CD4-positive, alpha-beta memory T cell (primary cell): ENCODE measurements at regions of chr10 and their contacts with region 1.

Region 1: GRCh38 chr10:72126184-72126871 is 38.0 kb upstream of the SPOCK2 start:
- DNase-seq: peak in 3 of 5 donors; percentile 16 to 28 (median 25)
- H3K4me3 ChIP-seq: no peak overlapping the region
- H3K4me3 Mint-ChIP-seq: no peak overlapping the region
- H3K27ac ChIP-seq: no peak overlapping the region
- H3K27ac Mint-ChIP-seq: peak overlapping the region in 5 of 7 donors; percentile 25 to 87 (median 38)
- H3K4me1 ChIP-seq: peaks cover 29% of the 10 kb centered on the region
- H3K4me1 Mint-ChIP-seq: peaks cover 24 to 34% (median 26%) of the 10 kb centered on the region in 4 donors
- H3K27me3 ChIP-seq: no peaks in the 10 kb centered on the region
- H3K27me3 Mint-ChIP-seq: no peaks in the 10 kb centered on the region

Region 2: GRCh38 chr10:72079356-72079755 is 47.0 kb before region 1 on chr10:
- CTCF ChIA-PET with region 1: interaction called, 10 read pairs
- POLR2A ChIA-PET with region 1: interaction called, 5 read pairs
- intact Hi-C with region 1: no loop called
- DNase-seq: peak; percentile 55 to 85 (median 71)
- H3K4me3 ChIP-seq: peak overlapping the region in 1 of 2 donors; percentile 25
- H3K4me3 Mint-ChIP-seq: peak overlapping the region; percentile 47 to 96 (median 81)
- H3K27ac ChIP-seq: peak overlapping the region; percentile 94
- H3K27ac Mint-ChIP-seq: peak overlapping the region; percentile 86 to 97 (median 93)
- H3K4me1 ChIP-seq: peaks cover 97% of the 10 kb centered on the region
- H3K4me1 Mint-ChIP-seq: peaks cover 59 to 99% (median 87%) of the 10 kb centered on the region in 4 donors
- H3K27me3 ChIP-seq: no peaks in the 10 kb centered on the region
- H3K27me3 Mint-ChIP-seq: no peaks in the 10 kb centered on the region

Region 3: DNA sequence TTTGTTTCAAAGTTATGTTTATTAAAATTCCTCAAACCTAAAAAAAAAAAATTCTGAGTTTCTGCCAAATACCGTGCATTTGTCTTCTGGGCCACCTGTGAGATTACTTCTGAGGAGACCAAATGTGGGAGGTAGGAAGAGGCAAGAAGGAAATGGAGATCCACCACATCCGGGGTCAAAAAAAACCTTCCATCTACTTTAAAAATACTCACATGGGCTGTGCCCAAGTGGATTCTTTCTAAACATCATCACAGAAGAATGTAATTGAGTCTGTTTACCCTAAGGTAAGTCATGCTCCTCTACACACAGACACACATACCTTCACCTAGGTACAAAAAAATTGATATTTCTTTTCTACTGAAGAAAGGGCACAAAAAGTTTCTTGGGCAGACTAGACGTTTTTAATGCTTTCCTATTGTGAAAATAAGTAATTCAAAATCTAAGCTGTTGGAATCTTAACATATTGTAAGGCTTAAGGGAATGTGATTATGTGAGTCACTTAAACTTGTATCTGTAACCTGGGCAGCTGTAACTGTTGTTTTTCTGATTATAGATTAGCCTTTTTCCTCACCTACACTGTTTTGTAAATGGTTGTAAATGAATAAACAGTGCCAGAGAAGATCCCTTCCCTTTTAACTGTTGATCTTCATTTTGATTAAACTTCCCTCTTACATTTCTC is 18.9 kb before region 1 on chr10:
- CTCF ChIA-PET with region 1: interaction called, 14 read pairs
- POLR2A ChIA-PET with region 1: interaction called, 11 read pairs
- intact Hi-C with region 1: loop called (anchors 2 kb)
- DNase-seq: peak; percentile 62 to 72 (median 71)
- H3K4me3 ChIP-seq: peak overlapping the region in 1 of 2 donors; percentile 16
- H3K4me3 Mint-ChIP-seq: peak overlapping the region; percentile 61 to 87 (median 81)
- H3K27ac ChIP-seq: peak overlapping the region; percentile 53
- H3K27ac Mint-ChIP-seq: peak overlapping the region; percentile 81 to 97 (median 90)
- H3K4me1 ChIP-seq: peaks cover 78% of the 10 kb centered on the region
- H3K4me1 Mint-ChIP-seq: peaks cover 61 to 91% (median 80%) of the 10 kb centered on the region in 4 donors
- H3K27me3 ChIP-seq: no peaks in the 10 kb centered on the region
- H3K27me3 Mint-ChIP-seq: no peaks in the 10 kb centered on the region

Region 4: DNA sequence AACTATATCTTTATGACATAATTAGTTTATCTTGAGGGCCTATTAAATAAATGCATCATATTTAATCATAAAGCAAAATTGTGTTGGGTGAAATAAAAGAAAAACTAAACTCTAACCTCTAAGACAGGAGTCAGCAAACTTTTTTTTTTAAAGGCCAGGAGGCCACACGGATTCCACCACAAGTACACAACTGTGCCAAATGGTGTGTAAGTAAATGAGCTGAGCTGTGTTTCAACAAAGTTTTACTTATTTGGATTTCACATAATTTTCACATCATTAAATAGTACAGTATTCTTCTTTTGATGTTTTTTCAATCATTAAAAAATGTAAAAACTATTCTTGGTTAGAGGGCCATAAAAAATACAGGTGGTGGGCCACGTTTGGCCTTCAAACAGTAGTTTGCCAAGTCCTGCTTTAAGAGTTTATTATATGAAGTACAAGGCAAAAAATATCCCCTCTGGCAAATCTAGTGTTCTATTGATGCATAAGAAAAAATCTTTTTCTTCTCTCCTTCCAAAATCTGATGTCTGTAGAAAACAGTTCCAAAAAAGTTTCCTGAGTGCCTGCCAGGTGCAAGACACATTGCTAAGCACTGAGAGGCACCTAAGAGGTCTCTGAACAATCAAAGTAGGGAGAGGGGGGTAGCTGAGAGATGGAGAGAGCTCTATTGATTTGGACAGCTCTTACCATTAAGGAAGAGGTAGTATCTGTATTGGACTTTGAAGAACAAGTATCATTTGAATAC is 11.4 kb before region 1 on chr10:
- CTCF ChIA-PET with region 1: interaction called, 40 read pairs
- POLR2A ChIA-PET with region 1: interaction called, 11 read pairs
- intact Hi-C with region 1: no loop called
- DNase-seq: no peak
- H3K4me3 ChIP-seq: no peak overlapping the region
- H3K4me3 Mint-ChIP-seq: peak overlapping the region in 1 of 8 donors; percentile 7
- H3K27ac ChIP-seq: no peak overlapping the region
- H3K27ac Mint-ChIP-seq: peak overlapping the region in 6 of 7 donors; percentile 18 to 85 (median 60)
- H3K4me1 ChIP-seq: peaks cover 26% of the 10 kb centered on the region
- H3K4me1 Mint-ChIP-seq: peaks cover 26 to 45% (median 36%) of the 10 kb centered on the region in 4 donors
- H3K27me3 ChIP-seq: no peaks in the 10 kb centered on the region
- H3K27me3 Mint-ChIP-seq: no peaks in the 10 kb centered on the region

Region 5: GRCh38 chr10:72140174-72140573 is 13.8 kb after region 1 on chr10:
- CTCF ChIA-PET with region 1: interaction called, 34 read pairs
- POLR2A ChIA-PET with region 1: interaction called, 4 read pairs
- intact Hi-C with region 1: no loop called
- DNase-seq: no peak
- H3K4me3 ChIP-seq: no peak overlapping the region
- H3K4me3 Mint-ChIP-seq: no peak overlapping the region
- H3K27ac ChIP-seq: no peak overlapping the region
- H3K27ac Mint-ChIP-seq: peak overlapping the region in 3 of 7 donors; percentile 13 to 67 (median 38)
- H3K4me1 ChIP-seq: peaks cover 10% of the 10 kb centered on the region
- H3K4me1 Mint-ChIP-seq: peaks cover 8 to 17% (median 13%) of the 10 kb centered on the region in 4 donors
- H3K27me3 ChIP-seq: no peaks in the 10 kb centered on the region
- H3K27me3 Mint-ChIP-seq: no peaks in the 10 kb centered on the region

Region 6: GRCh38 chr10:72223743-72224101 is 97.4 kb after region 1 on chr10:
- CTCF ChIA-PET with region 1: interaction called, 35 read pairs
- POLR2A ChIA-PET with region 1: interaction called, 5 read pairs
- intact Hi-C with region 1: loop called (anchors 2 kb)
- DNase-seq: no peak
- H3K4me3 ChIP-seq: no peak overlapping the region
- H3K4me3 Mint-ChIP-seq: peak overlapping the region in 3 of 8 donors; percentile 22 to 69 (median 44)
- H3K27ac ChIP-seq: no peak overlapping the region
- H3K27ac Mint-ChIP-seq: peak overlapping the region; percentile 17 to 91 (median 78)
- H3K4me1 ChIP-seq: peaks cover 54% of the 10 kb centered on the region
- H3K4me1 Mint-ChIP-seq: peaks cover 36 to 57% (median 45%) of the 10 kb centered on the region in 4 donors
- H3K27me3 ChIP-seq: no peaks in the 10 kb centered on the region
- H3K27me3 Mint-ChIP-seq: no peaks in the 10 kb centered on the region

Region 7: GRCh38 chr10:72248468-72249151 is 122.3 kb after region 1 on chr10:
- CTCF ChIA-PET with region 1: interaction called, 10 read pairs
- POLR2A ChIA-PET with region 1: interaction called, 4 read pairs
- intact Hi-C with region 1: no loop called
- DNase-seq: peak; percentile 85 to 90 (median 87)
- H3K4me3 ChIP-seq: peak overlapping the region; percentile 31 to 33
- H3K4me3 Mint-ChIP-seq: peak overlapping the region; percentile 83 to 92 (median 86)
- H3K27ac ChIP-seq: peak overlapping the region; percentile 55
- H3K27ac Mint-ChIP-seq: peak overlapping the region; percentile 95 to 98 (median 96)
- H3K4me1 ChIP-seq: peaks cover 96% of the 10 kb centered on the region
- H3K4me1 Mint-ChIP-seq: peaks cover 58 to 91% (median 77%) of the 10 kb centered on the region in 4 donors
- H3K27me3 ChIP-seq: no peaks in the 10 kb centered on the region
- H3K27me3 Mint-ChIP-seq: no peaks in the 10 kb centered on the region